Heart left ventricle (tissue), 16 donors: ENCODE measurements at regions of chr11 and their contacts with region 1.

Region 1: DNA sequence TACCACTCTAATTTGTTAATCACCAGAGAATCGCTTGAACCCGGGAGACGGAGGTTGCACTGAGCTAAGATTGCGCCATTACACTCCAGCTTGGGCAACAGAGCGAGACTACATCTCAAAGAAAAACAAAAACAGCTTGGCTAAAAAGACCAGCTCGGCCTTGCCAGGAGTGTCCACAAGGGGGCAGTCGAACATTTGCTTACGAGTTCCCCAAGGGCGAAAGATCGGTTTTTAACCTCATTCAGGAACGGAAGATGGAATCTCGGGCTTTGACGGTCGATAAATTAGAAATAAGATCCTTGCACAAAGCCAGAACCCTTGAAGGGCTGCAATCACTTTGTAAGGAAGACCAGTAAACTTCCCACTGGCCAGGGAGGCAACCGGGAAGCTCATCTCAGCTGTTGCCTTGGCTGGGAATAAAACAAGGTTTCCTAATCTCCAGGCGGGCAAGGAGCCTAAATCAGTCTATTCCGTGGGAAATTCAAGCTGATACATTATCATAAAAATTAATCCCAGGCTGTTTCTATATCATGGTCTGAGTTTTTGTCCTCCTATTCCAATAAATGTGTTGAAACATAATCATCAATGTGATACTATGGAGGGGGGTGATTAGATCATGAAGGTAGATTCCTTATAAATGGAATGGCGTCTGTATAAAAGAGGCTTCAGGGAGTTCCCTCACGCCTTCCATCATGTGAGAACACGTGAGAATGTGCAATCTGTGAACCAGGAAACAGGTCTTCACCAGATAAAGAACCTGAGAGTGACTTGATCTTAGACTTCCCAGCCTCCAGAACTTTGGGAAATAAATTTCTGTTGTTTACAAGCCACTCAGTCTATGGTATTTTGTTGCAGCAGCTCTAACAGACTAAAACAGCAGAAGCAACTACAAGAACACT is 14.9 kb upstream of the SLC29A2 start:
- DNase-seq: peak; percentile 68 to 88 (median 78)
- ATAC-seq: peak in 3 of 4 donors; percentile 62 to 84 (median 64)
- H3K4me3 ChIP-seq: peak overlapping the region in 8 of 12 donors; percentile 7 to 48 (median 34)
- H3K27ac ChIP-seq: peak overlapping the region in 3 of 12 donors; percentile 20 to 44 (median 30)
- H3K4me1 ChIP-seq: peaks cover 0 to 9% (median 5%) of the 10 kb centered on the region in 12 donors
- H3K27me3 ChIP-seq: peaks cover 0 to 7% (median 0%) of the 10 kb centered on the region in 9 donors
- CTCF ChIP-seq: peak; percentile 84 to 96 (median 90)
- POLR2A ChIP-seq: no peak

Region 2: DNA sequence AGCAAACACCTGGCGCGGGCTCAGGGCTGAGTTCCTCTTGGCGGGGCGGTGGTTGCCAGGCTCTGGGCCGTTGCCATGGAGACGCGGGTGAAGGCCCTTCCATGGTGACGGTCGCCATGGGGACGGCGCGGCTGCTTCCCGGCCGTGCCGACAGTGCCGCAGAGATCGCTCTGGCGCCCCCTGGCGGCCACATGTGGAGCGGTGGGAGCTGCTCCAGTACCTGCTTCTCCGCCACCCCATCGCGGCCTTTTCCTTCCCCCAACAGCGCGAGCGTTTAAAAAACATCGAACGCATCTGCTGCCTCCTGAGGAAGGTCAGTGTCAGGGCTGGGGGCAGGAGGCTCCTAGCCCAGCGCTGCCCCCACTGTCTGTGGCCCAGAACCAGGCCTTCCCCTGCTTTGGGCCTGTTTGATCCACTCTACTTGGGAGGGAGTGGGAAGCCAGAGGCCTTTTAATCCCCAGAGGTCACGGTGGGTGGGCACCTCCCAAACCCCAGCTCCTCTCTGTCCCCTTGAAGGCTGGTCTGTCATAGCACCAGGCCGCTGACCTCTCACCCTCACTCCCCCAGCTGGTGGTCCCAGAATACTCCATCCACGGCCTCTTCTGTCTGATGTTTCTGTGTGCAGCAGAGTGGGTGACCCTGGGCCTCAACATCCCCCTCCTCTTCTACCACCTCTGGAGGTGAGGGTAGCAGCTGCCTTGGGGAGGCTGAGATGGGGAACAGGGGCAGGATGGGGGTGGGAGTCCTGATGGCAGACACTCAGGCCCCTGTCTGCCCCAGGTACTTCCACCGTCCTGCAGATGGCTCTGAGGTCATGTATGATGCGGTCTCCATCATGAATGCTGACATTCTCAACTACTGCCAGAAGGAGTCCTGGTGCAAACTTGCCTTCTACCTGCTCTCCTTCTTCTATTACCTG is 103.7 kb before region 1 on chr11:
- intact Hi-C with region 1: no loop called
- DNase-seq: peak; percentile 96 to 99 (median 97)
- ATAC-seq: peak; percentile 75 to 87 (median 82)
- H3K4me3 ChIP-seq: no peak overlapping the region
- H3K27ac ChIP-seq: no peak overlapping the region
- H3K4me1 ChIP-seq: peaks cover 0 to 48% (median 28%) of the 10 kb centered on the region in 12 donors
- H3K27me3 ChIP-seq: no peaks in the 10 kb centered on the region
- CTCF ChIP-seq: peak; percentile 96 to 100 (median 98)
- POLR2A ChIP-seq: no peak

Region 3: DNA sequence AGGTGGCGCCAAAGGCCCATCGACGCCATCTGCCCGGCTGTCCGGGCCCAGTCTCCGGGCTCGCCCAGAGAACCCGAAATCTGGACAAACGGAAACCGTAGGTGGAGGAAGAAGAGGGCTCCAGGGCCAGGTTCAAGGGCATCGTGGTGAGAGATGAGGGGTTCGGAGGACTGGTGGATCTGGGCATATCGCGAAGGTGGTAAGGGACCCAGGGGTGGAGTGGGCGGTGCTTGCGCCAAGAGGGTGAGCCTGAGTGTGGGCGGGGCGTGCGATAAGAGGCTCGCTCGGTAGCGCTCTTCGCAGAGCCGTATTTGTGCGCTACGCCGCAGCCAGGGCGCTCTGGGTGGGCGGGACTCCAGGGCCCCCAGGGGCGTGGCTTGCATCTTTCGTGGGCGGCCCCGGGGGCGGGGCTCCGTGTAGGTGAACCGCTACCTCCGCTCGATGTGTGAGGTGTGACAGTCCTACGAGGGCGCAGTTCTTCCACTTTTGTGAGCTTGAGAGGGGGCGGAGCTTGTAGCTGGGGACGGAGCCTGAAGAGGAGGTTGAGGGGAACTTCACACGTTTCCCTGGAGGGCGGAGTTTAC is 74.4 kb before region 1 on chr11:
- intact Hi-C with region 1: loop called in 9 of 10 experiments (anchors 1 to 5 kb)
- DNase-seq: peak; percentile 92 to 96 (median 93)
- ATAC-seq: peak; percentile 80 to 87 (median 82)
- H3K4me3 ChIP-seq: peak overlapping the region; percentile 18 to 66 (median 62)
- H3K27ac ChIP-seq: peak overlapping the region; percentile 53 to 94 (median 84)
- H3K4me1 ChIP-seq: peaks cover 0 to 37% (median 18%) of the 10 kb centered on the region in 12 donors
- H3K27me3 ChIP-seq: no peaks in the 10 kb centered on the region
- CTCF ChIP-seq: peak in 11 of 12 donors; percentile 9 to 98 (median 87)
- POLR2A ChIP-seq: peak in 1 of 2 donors; percentile 42

Region 4: DNA sequence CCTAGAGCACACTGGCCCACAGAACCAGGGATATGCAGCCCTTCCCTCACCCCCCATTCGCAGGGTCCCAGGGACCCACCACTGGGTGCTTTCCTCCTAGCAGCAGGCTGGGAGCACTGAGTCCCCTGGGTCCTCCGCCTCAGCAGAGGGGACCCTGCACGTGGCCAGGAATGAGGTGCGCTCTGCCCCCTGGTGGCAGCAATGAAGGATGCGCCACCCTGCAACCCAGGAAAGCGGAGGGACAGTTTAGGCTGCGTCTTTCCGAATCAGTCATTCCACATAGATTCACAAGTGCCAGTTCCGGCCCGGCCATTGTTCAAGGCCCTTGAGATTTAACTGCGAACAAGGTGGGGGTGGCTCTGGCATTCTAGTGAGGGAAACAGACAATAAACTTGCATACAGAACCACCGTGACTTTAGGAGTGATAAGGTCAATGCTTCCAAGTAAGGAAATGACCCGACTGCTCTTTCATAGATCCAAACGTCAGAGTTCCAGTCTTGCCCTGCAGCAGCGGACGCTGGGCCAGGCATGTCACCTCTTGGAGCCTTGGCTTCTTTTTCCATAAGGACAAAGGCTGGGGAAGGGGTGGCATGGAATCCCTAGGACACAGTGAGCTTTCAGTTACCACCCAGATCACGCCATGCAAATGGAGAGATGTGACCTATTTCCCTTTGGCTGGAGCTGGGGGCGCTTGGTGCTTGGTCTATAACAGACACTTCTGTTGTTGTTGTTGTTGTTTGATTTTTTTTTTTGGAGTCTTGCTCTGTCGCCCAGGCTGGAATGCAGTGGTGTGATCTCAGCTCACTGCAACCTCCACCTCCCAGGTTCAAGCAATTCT is 57.9 kb before region 1 on chr11:
- intact Hi-C with region 1: loop called in 1 of 10 experiments (anchors 5 kb)
- DNase-seq: peak; percentile 78 to 87 (median 80)
- ATAC-seq: peak; percentile 56 to 79 (median 74)
- H3K4me3 ChIP-seq: peak overlapping the region in 6 of 12 donors; percentile 1 to 28 (median 21)
- H3K27ac ChIP-seq: peak overlapping the region in 5 of 12 donors; percentile 19 to 84 (median 23)
- H3K4me1 ChIP-seq: peaks cover 4 to 37% (median 32%) of the 10 kb centered on the region in 12 donors
- H3K27me3 ChIP-seq: no peaks in the 10 kb centered on the region
- CTCF ChIP-seq: peak; percentile 92 to 98 (median 97)
- POLR2A ChIP-seq: no peak

Region 5: DNA sequence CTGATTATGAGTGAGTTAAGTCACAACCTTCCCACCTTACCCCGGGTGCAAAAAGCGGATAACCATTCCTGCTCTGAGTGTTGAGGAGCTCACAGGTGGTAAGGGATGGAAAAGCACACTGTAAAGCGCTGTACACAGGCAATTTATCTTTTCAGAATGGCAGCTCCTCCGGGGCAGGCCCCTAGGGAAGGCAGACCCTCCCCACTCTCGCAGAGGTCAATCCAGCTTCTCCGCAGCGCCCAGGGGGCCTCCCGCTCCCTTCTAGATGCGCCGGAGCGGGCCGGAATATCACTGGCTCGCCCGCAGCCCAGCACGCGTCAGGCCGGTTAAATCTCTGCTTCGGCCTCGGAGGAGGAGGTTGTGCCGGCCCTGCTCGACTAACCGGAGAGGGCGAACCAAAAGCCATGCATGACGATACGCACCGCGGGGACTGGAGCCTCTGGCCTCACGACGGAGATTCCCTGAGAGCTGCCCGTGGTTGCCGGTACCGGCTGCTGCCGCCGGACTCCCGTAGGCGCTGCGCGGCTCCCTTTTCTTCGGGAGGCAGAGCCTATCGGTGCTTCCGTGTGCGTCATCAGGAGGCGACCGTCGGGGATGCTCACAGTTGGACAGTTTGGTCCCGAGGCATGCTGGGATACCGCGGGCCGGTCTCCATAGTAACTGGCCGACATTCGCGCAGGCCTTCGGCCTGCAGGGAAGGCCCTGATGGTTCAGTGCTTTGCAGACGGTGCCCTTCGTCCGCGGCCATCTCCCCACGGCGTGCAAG is 41.7 kb before region 1 on chr11 and contains the start of gene BRMS1:
- intact Hi-C with region 1: loop called in 1 of 10 experiments (anchors 5 kb)
- DNase-seq: peak; percentile 98 to 100 (median 99)
- ATAC-seq: peak; percentile 89 to 96 (median 91)
- H3K4me3 ChIP-seq: peak within 1 kb of the TSS; percentile 84 to 100 (median 96)
- H3K27ac ChIP-seq: peak within 1 kb of the TSS in 11 of 12 donors; percentile 41 to 87 (median 80)
- H3K4me1 ChIP-seq: peaks cover 4 to 47% (median 34%) of the 10 kb centered on the region in 12 donors
- H3K27me3 ChIP-seq: no peaks in the 10 kb centered on the region
- CTCF ChIP-seq: peak in 3 of 12 donors; percentile 14 to 19 (median 17)
- POLR2A ChIP-seq: peak in 1 of 2 donors; percentile 89
- total RNA-seq, gene BRMS1: 9.7 to 39.2 (median 16.5) TPM

Region 6: DNA sequence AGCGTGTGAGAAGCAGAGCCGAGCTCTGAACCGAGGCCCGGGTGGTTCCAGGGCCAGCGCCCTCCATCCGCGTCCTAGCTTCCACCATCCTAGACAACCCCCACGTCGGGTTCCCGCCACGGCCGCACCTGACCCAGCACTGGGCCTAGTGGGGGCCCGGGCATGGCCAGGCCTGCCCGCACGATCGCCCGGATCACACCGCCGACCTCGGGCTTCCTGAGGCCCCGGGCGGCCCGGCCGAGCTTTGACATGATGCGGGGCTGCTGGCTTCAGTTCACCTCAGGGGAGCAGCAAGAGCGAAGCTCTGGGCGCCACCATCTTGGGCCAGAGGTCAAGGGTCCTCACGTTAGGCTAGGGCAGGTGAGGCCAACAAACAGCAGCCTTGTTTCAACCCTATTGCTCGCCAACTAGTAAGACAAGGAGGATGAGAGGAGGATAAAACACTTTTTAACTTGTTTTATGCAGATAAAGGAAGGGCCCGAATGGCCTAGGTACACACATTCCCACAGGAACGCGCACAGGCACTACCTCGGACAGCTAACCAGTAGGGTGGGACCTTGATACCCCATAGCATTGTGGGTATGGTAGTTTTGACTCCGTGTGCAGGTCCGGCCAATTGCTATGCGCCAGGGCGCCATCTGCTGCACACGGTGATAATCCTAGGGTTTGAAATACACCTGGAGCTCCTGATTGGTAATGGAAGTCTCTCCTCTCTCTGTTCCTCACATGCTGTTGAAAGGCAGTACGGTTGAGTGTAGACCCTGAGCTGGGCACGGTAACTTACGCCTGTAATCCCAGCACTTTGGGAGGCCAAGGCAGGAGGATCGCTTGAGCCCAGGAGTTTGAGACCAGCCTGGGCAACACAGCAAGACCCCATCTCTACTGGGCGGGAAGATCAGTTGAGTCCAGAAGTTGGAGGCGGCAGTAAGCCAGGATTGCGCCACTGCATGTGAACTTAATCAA is 52.4 kb after region 1 on chr11 and contains the start of gene MRPL11:
- intact Hi-C with region 1: loop called in 1 of 10 experiments (anchors 5 kb)
- DNase-seq: peak; percentile 86 to 93 (median 89)
- ATAC-seq: peak; percentile 99 to 100 (median 100)
- H3K4me3 ChIP-seq: peak within 1 kb of the TSS; percentile 63 to 98 (median 83)
- H3K27ac ChIP-seq: peak within 1 kb of the TSS; percentile 82 to 95 (median 90)
- H3K4me1 ChIP-seq: peaks cover 0 to 11% (median 8%) of the 10 kb centered on the region in 12 donors
- H3K27me3 ChIP-seq: no peaks in the 10 kb centered on the region
- CTCF ChIP-seq: peak; percentile 31 to 88 (median 68)
- POLR2A ChIP-seq: peak in 1 of 2 donors; percentile 14
- total RNA-seq, gene MRPL11: 38.9 to 56.9 (median 47.4) TPM